Transverse colon (tissue), 4 donors: ENCODE measurements at regions of chr20 and their contacts with region 1.

Region 1: GRCh38 chr20:53570521-53571357 is 22.9 kb downstream of the ZNF217 start:
- DNase-seq: no peak
- H3K4me3 ChIP-seq: no peak overlapping the region
- H3K27ac ChIP-seq: no peak overlapping the region
- H3K4me1 ChIP-seq: no peaks in the 10 kb centered on the region
- H3K27me3 ChIP-seq: no peaks in the 10 kb centered on the region
- CTCF ChIP-seq: no peak
- EP300 ChIP-seq: no peak
- POLR2A ChIP-seq: no peak

Region 2: DNA sequence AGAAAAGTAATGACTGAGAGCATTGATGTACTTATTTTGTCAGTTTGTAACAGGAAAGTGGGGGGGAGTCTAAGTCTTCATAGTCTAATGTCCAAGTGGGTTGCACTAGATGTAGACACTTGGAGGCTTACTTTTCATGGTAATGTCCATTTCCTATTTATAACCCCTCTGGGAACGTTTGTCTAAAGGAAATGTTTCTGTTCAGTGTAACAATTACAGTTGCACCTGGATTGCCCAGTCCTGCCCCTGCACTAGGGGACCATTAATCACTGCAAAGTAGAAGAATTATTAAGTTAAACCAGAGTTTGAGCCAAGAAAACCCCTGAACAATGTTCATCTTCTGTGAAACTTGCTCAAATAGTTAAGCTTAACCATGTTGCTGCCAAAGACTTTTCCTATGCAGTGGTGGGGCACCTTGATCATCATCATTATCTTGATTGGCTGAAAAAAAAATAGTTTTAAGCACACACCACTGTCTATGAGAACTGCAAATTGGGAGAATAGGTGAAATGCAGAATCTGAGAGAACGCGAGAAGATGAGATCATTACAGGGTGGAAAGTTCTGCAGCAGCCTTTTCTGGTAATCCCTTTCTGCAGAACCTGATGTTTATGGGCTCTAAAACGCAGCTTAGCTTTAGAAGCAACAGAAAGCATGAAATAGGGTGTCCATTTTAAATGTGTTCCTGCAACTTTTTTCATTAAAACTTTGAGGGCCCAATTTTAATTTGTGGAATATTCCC is 83.1 kb before region 1 on chr20:
- in situ Hi-C with region 1: no loop called
- intact Hi-C with region 1: no loop called
- DNase-seq: no peak
- H3K4me3 ChIP-seq: no peak overlapping the region
- H3K27ac ChIP-seq: no peak overlapping the region
- H3K4me1 ChIP-seq: no peaks in the 10 kb centered on the region
- H3K27me3 ChIP-seq: no peaks in the 10 kb centered on the region
- CTCF ChIP-seq: no peak
- EP300 ChIP-seq: no peak
- POLR2A ChIP-seq: no peak

Region 3: GRCh38 chr20:54062812-54063280 is 492.1 kb after region 1 on chr20:
- in situ Hi-C with region 1: loop called in 3 of 4 experiments (anchors 10 to 25 kb)
- intact Hi-C with region 1: no loop called
- DNase-seq: no peak
- H3K4me3 ChIP-seq: no peak overlapping the region
- H3K27ac ChIP-seq: no peak overlapping the region
- H3K4me1 ChIP-seq: peaks cover 0 to 20% (median 9%) of the 10 kb centered on the region in 4 donors
- H3K27me3 ChIP-seq: no peaks in the 10 kb centered on the region
- CTCF ChIP-seq: peak; percentile 41 to 59 (median 52)
- EP300 ChIP-seq: no peak
- POLR2A ChIP-seq: no peak

Region 4: DNA sequence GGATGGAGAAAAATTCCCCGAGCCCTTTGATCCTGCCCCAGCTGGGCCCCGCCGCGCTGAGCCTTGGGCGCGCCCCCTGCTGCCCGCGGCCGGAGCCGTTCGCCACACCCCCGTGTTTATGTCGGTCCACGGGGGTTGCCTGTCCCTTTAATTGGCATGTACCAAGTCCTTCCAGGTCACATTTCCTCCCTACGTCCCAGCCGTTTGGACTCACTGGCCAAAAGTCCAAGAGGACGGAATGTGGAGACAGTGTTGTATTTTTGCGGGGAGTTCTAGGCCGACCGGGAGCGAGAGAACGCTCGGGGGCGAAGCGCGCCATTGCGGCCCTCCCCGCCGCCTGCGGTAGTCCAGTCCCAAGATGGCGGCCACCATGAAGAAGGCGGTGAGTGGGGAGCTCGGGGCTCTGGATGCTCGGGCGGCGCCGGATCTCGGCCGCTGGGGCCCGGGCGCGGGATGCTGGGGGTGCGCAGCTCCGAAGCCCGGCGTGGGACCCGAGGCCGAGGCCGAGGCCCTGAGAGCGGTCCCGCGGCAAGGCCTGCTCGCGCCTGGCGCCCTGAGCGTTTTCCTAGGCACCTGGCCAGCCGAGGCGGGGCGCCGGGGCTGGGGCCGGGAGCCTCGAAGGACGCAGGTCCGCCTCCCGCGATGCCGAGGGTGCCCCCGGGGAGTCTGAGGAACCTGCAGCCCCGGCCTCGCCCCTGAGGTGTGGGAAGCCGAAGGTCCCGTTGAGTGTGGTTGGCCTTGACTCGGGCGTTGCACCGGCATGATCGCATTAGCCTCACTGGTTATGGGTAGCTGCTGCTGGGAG is 637.2 kb after region 1 on chr20 and contains the start of gene PFDN4:
- in situ Hi-C with region 1: loop called in 2 of 4 experiments (anchors 25 kb)
- intact Hi-C with region 1: no loop called
- DNase-seq: peak; percentile 88
- H3K4me3 ChIP-seq: peak within 1 kb of the TSS; percentile 84 to 97 (median 92)
- H3K27ac ChIP-seq: peak within 1 kb of the TSS; percentile 91 to 94 (median 92)
- H3K4me1 ChIP-seq: peaks cover 0 to 30% (median 16%) of the 10 kb centered on the region in 4 donors
- H3K27me3 ChIP-seq: no peaks in the 10 kb centered on the region
- CTCF ChIP-seq: peak; percentile 75 to 85 (median 84)
- EP300 ChIP-seq: no peak
- POLR2A ChIP-seq: no peak
- total RNA-seq, gene PFDN4: 4.6 to 73.5 (median 28.5) TPM